Transverse colon (tissue), 4 donors: ENCODE measurements at regions of chr4 and their contacts with region 1.

Region 1: GRCh38 chr4:30714408-30715027 is 5.7 kb upstream of the PCDH7 start:
- DNase-seq: peak; percentile 41
- H3K4me3 ChIP-seq: no peak overlapping the region
- H3K27ac ChIP-seq: no peak overlapping the region
- H3K4me1 ChIP-seq: peaks cover 4 to 34% (median 18%) of the 10 kb centered on the region in 4 donors
- H3K27me3 ChIP-seq: peaks cover 25% of the 10 kb centered on the region
- CTCF ChIP-seq: peak; percentile 59 to 76 (median 69)
- EP300 ChIP-seq: no peak
- POLR2A ChIP-seq: no peak

Region 2: DNA sequence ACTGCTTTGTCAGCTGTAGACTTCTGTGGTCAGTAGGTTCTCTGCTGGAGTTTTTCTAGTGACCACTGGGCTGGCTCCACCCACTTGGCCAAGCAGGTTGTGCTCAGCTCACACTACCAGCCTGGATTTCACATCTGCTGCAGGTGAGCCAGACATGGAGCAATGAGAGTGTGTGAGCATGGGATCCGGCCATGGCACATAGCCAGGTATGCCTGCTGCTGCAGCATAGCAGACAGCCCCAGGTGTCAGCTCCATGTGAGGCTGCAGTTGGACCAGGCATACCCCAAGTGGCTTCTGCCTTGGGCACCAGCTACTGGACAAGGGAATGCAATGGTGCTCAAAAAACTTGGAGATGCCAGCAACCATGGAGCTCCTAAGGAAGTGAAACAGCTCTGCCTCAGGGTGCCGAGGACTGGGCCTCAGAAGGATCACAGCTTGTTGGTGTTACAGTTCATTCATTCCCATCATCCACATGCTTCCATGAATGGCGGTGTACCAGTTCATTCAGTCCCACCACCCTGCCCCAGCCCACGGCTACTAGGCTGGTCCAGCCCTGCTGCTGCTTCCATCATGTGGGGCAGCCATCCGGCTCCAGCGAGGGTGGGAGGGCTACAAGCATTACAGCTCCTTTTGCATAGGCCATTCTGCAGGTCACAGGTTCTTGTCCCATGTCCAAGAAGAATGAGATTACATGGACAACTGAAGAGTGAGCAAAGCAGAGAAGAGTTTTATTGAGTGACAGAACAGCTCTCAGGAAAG is 383.4 kb before region 1 on chr4:
- in situ Hi-C with region 1: no loop called
- intact Hi-C with region 1: no loop called
- DNase-seq: no peak
- H3K4me3 ChIP-seq: no peak overlapping the region
- H3K27ac ChIP-seq: no peak overlapping the region
- H3K4me1 ChIP-seq: no peaks in the 10 kb centered on the region
- H3K27me3 ChIP-seq: no peaks in the 10 kb centered on the region
- CTCF ChIP-seq: no peak
- EP300 ChIP-seq: no peak
- POLR2A ChIP-seq: no peak

Region 3: GRCh38 chr4:31045724-31046318 is 331.3 kb after region 1 on chr4:
- in situ Hi-C with region 1: loop called in 1 of 4 experiments (anchors 25 kb)
- intact Hi-C with region 1: no loop called
- DNase-seq: peak; percentile 9
- H3K4me3 ChIP-seq: no peak overlapping the region
- H3K27ac ChIP-seq: no peak overlapping the region
- H3K4me1 ChIP-seq: peaks cover 0 to 3% (median 0%) of the 10 kb centered on the region in 4 donors
- H3K27me3 ChIP-seq: no peaks in the 10 kb centered on the region
- CTCF ChIP-seq: peak in 3 of 5 experiments; percentile 28 to 47 (median 37)
- EP300 ChIP-seq: no peak
- POLR2A ChIP-seq: no peak

Region 4: GRCh38 chr4:31674313-31674947 is 959.9 kb after region 1 on chr4:
- in situ Hi-C with region 1: loop called in 3 of 4 experiments (anchors 25 kb)
- intact Hi-C with region 1: no loop called
- DNase-seq: no peak
- H3K4me3 ChIP-seq: no peak overlapping the region
- H3K27ac ChIP-seq: no peak overlapping the region
- H3K4me1 ChIP-seq: no peaks in the 10 kb centered on the region
- H3K27me3 ChIP-seq: no peaks in the 10 kb centered on the region
- CTCF ChIP-seq: peak; percentile 28 to 44 (median 41)
- EP300 ChIP-seq: no peak
- POLR2A ChIP-seq: no peak

Region 5: GRCh38 chr4:31692402-31692940 is 978.0 kb after region 1 on chr4:
- in situ Hi-C with region 1: loop called in 1 of 4 experiments (anchors 25 kb)
- intact Hi-C with region 1: no loop called
- DNase-seq: no peak
- H3K4me3 ChIP-seq: no peak overlapping the region
- H3K27ac ChIP-seq: no peak overlapping the region
- H3K4me1 ChIP-seq: no peaks in the 10 kb centered on the region
- H3K27me3 ChIP-seq: no peaks in the 10 kb centered on the region
- CTCF ChIP-seq: no peak
- EP300 ChIP-seq: no peak
- POLR2A ChIP-seq: no peak